ENCODE measurements at regions of chr20 and their contacts with region 1.

Region 1: DNA sequence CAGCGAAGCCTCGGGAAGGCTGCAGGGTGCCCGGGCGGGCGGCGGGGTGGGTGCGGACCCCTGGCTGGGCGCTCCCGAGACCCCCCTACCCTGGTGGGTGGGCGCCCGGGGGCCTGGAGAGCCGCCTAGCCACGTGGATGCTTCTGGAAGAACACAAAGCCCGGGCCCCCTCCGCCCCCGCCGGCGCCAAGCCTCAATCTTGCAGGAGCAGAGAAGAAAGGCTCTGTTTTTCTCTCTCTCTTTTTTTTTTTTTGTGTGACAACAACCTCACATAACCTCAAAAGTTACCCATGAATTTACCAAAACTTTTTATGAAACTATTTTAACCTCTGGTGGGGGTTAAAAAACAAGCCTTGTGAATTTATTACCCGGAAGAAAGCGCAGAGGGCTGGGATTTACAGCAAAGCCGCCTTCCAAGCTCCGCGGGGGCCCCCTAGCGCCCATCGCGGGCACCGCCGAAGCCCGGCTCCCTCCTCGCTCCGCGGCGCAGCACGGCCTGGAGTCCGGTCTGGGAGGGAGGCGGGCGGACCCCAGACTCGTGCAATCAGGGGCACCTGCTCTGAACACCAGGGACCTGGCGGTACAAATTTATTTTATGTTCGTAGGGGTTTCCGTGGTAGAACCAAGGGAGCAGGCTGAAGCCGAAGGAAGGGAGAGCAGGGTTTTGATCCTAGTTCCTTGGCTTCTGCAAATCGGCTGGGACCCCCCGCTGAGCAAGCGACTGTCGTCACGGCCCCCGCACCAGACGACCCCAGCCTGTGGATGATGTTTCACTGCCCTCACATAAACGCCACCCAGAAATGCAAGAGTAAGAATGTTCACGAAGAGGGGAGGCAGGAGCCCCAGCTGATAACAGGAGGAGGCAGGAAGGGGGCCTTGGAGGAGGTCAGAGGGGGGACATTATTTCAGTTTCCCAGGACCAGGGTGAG is 58.9 kb downstream of the ZNF831 start:
- DNase-seq: peak; percentile 93

Region 2: GRCh38 chr20:58870239-58871014 is 352.1 kb before region 1 on chr20:
- intact Hi-C with region 1: loop called in 1 of 2 experiments (anchors 5 kb)
- DNase-seq: peak; percentile 84

Region 3: GRCh38 chr20:59087829-59088433 is 134.6 kb before region 1 on chr20:
- intact Hi-C with region 1: loop called (anchors 5 kb)
- DNase-seq: peak; percentile 91

Measured in posterior vena cava (tissue), 2 donors.